ENCODE measurements at regions of chr3 and their contacts with region 1.

Region 1: GRCh38 chr3:44913868-44914468 is 39.6 kb downstream of the TGM4 start:
- DNase-seq: peak; percentile 38 to 82 (median 64)
- H3K4me3 ChIP-seq: no peak overlapping the region
- H3K27ac ChIP-seq: no peak overlapping the region
- H3K4me1 ChIP-seq: no peaks in the 10 kb centered on the region
- H3K27me3 ChIP-seq: no peaks in the 10 kb centered on the region
- CTCF ChIP-seq: peak; percentile 48 to 70 (median 64)
- POLR2A ChIP-seq: no peak

Region 2: GRCh38 chr3:44529927-44530326 is 384.0 kb before region 1 on chr3:
- intact Hi-C with region 1: loop called in 1 of 2 experiments (anchors 5 kb)
- DNase-seq: peak in 1 of 7 donors; percentile 5
- H3K4me3 ChIP-seq: no peak overlapping the region
- H3K27ac ChIP-seq: no peak overlapping the region
- H3K4me1 ChIP-seq: no peaks in the 10 kb centered on the region
- H3K27me3 ChIP-seq: no peaks in the 10 kb centered on the region
- CTCF ChIP-seq: no peak
- POLR2A ChIP-seq: no peak

Region 3: DNA sequence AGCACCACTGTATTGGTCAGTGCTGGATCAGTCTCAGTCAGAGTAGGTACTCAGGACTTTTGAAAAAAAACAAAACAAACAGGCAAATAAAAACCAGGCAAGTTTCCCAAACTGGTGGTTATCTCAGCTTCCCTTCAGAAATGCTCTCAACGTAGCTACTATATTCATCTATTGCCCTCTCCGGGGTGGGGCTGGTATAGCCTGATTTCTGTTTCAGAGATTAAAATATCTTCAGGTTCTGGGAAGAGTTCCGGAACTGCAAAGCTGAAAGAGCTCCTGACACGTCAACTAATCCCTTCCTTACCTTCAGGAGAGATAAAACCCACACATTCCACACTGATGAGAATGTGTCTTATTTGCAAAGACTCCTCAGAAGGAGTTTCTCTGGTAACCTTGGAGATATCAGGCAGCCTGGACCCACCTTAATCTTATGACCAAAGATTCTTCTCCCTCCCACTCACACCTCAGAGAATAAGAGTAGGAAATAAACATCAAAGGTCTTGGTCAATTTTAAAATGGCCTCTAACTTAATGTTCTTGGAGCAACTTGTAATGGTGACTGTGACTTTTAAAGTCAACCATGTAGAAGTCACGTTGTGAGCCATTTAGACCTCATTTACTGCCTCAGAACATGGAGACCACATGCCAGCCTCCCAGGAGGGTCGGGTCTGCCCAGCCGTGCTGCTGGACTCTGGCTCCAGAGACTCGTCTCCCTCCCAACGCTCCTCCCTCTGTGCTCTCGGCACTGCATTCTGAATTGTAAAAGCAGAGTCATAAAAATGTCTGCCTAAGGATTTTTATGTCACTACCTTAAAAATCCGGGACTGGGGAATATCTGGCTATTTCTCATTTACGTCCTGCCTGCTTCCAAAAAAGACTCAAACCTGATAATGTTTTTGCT is 178.4 kb after region 1 on chr3:
- intact Hi-C with region 1: no loop called
- DNase-seq: no peak
- H3K4me3 ChIP-seq: no peak overlapping the region
- H3K27ac ChIP-seq: no peak overlapping the region
- H3K4me1 ChIP-seq: no peaks in the 10 kb centered on the region
- H3K27me3 ChIP-seq: no peaks in the 10 kb centered on the region
- CTCF ChIP-seq: no peak
- POLR2A ChIP-seq: no peak